ENCODE measurements at regions of chr4 and their contacts with region 1.

Region 1: GRCh38 chr4:9994246-9994847 is 26.9 kb downstream of the SLC2A9 start:
- DNase-seq: no peak
- ATAC-seq: no peak

Region 2: GRCh38 chr4:9904976-9905587 is 89.3 kb before region 1 on chr4:
- intact Hi-C with region 1: loop called (anchors 5 kb)
- DNase-seq: peak; percentile 53
- ATAC-seq: peak; percentile 60

Region 3: GRCh38 chr4:10336471-10336870 is 342.1 kb after region 1 on chr4:
- intact Hi-C with region 1: no loop called
- DNase-seq: no peak
- ATAC-seq: no peak